HepG2 (cell line): ENCODE measurements at regions of chr17 and their contacts with region 1.

Region 1: GRCh38 chr17:39699818-39700147 is at the start of gene ERBB2:
- DNase-seq: peak; percentile 64
- ATAC-seq: peak; percentile 20
- H3K4me3 ChIP-seq: peak within 1 kb of the TSS; percentile 90 to 94 (median 90)
- H3K27ac ChIP-seq: peak within 1 kb of the TSS; percentile 78
- H3K4me1 ChIP-seq: peaks cover 78% of the 10 kb centered on the region
- H3K27me3 ChIP-seq: no peaks in the 10 kb centered on the region
- CTCF ChIP-seq: 0 out of 2 replicates have a peak, but pooled peaks have one; percentile 14
- EP300 ChIP-seq: no peak
- POLR2A ChIP-seq: peak; percentile 53 to 73
- RAD21 ChIP-seq: no peak
- total RNA-seq, gene ERBB2: 30.2 and 64.1 TPM in 2 replicates

Region 2: GRCh38 chr17:39513309-39513708 is 186.5 kb before region 1 on chr17:
- CTCF ChIA-PET with region 1: no interaction called
- POLR2A ChIA-PET with region 1: no interaction called
- in situ Hi-C with region 1: no loop called
- intact Hi-C with region 1: no loop called
- DNase-seq: no peak
- ATAC-seq: no peak
- H3K4me3 ChIP-seq: no peak overlapping the region
- H3K27ac ChIP-seq: no peak overlapping the region
- H3K4me1 ChIP-seq: no peaks in the 10 kb centered on the region
- H3K27me3 ChIP-seq: no peaks in the 10 kb centered on the region
- CTCF ChIP-seq: no peak
- EP300 ChIP-seq: no peak
- POLR2A ChIP-seq: no peak
- RAD21 ChIP-seq: no peak

Region 3: DNA sequence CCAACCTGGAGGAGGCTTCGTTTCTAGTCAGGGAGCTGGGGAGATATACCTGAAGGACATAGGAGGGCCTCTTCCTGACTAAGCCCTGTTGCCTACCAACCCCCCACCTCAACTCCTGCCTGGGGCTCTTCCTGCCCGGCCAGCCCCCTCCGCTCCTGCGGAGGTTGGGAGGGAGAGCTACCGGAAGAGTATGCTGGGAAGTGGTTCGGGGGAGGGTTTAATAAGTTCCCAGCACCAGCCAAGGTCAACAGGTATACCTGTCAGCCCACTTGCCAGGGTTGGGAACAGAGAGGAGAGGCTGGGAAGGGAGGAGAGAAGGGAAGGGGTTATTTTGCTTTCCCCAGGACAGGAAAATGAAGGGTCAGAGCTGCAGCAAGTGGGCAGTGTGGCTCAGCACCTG is 68.4 kb before region 1 on chr17:
- CTCF ChIA-PET with region 1: no interaction called
- POLR2A ChIA-PET with region 1: interaction called, 11 read pairs
- in situ Hi-C with region 1: no loop called
- intact Hi-C with region 1: no loop called
- DNase-seq: no peak
- ATAC-seq: no peak
- H3K4me3 ChIP-seq: peak overlapping the region in 1 of 3 experiments; percentile 45; a peak in 2 of 6 replicates
- H3K27ac ChIP-seq: no peak overlapping the region
- H3K4me1 ChIP-seq: peaks cover 95% of the 10 kb centered on the region
- H3K27me3 ChIP-seq: peaks cover 20 to 63% of the 10 kb centered on the region in 2 experiments; a peak in 4 of 5 replicates
- CTCF ChIP-seq: no peak
- EP300 ChIP-seq: no peak
- POLR2A ChIP-seq: no peak
- RAD21 ChIP-seq: no peak

Region 4: GRCh38 chr17:39668199-39668966 is 31.4 kb before region 1 on chr17 and contains the start of gene PNMT:
- CTCF ChIA-PET with region 1: no interaction called
- POLR2A ChIA-PET with region 1: interaction called, 96 read pairs
- in situ Hi-C with region 1: no loop called
- intact Hi-C with region 1: no loop called
- DNase-seq: peak; percentile 56
- ATAC-seq: peak; percentile 39
- H3K4me3 ChIP-seq: peak within 1 kb of the TSS; percentile 24 to 66 (median 46); a peak in 5 of 6 replicates
- H3K27ac ChIP-seq: no peak within 1 kb of the TSS
- H3K4me1 ChIP-seq: peaks cover 77% of the 10 kb centered on the region
- H3K27me3 ChIP-seq: peaks cover 11 to 51% of the 10 kb centered on the region in 2 experiments
- CTCF ChIP-seq: peak; percentile 94
- EP300 ChIP-seq: no peak
- POLR2A ChIP-seq: no peak
- RAD21 ChIP-seq: peak; percentile 85
- total RNA-seq, gene PNMT: not detected in 2 replicates

Region 5: GRCh38 chr17:39687811-39688518 is 11.8 kb before region 1 on chr17 and contains the start of gene PGAP3:
- CTCF ChIA-PET with region 1: no interaction called
- POLR2A ChIA-PET with region 1: interaction called, 118 read pairs
- in situ Hi-C with region 1: no loop called
- intact Hi-C with region 1: loop called (anchors 1 kb)
- DNase-seq: peak; percentile 95
- ATAC-seq: peak; percentile 95
- H3K4me3 ChIP-seq: peak within 1 kb of the TSS; percentile 72 to 76 (median 74)
- H3K27ac ChIP-seq: peak within 1 kb of the TSS; percentile 88
- H3K4me1 ChIP-seq: peaks cover 31% of the 10 kb centered on the region
- H3K27me3 ChIP-seq: no peaks in the 10 kb centered on the region; a peak in 1 of 5 replicates
- CTCF ChIP-seq: peak; percentile 65
- EP300 ChIP-seq: peak in 1 of 2 experiments; percentile 46; a peak in 2 of 4 replicates
- POLR2A ChIP-seq: peak; percentile 78 to 86
- RAD21 ChIP-seq: peak; percentile 54; the same call in 1 of the 2 replicates
- total RNA-seq, gene PGAP3: 5.1 and 11.9 TPM in 2 replicates

Region 6: GRCh38 chr17:39730095-39730921 is 30.5 kb after region 1 on chr17 and contains the start of gene MIEN1:
- CTCF ChIA-PET with region 1: no interaction called
- POLR2A ChIA-PET with region 1: interaction called, 69 read pairs
- in situ Hi-C with region 1: no loop called
- intact Hi-C with region 1: loop called (anchors 2 kb)
- DNase-seq: peak; percentile 78
- ATAC-seq: peak; percentile 89
- H3K4me3 ChIP-seq: peak within 1 kb of the TSS; percentile 68 to 81 (median 74)
- H3K27ac ChIP-seq: peak within 1 kb of the TSS; percentile 65
- H3K4me1 ChIP-seq: peaks cover 21% of the 10 kb centered on the region
- H3K27me3 ChIP-seq: no peaks in the 10 kb centered on the region
- CTCF ChIP-seq: peak; percentile 93
- EP300 ChIP-seq: 0 out of 4 replicates have a peak, but pooled peaks have one; percentile 3 to 49
- POLR2A ChIP-seq: peak; percentile 56 to 84
- RAD21 ChIP-seq: peak; percentile 97
- total RNA-seq, gene MIEN1: 40.6 and 48.6 TPM in 2 replicates

Region 7: GRCh38 chr17:39754161-39754951 is 54.6 kb after region 1 on chr17:
- CTCF ChIA-PET with region 1: interaction called, 4 read pairs
- POLR2A ChIA-PET with region 1: interaction called, 22 read pairs
- in situ Hi-C with region 1: no loop called
- intact Hi-C with region 1: no loop called
- DNase-seq: peak; percentile 87
- ATAC-seq: peak; percentile 81
- H3K4me3 ChIP-seq: peak overlapping the region; percentile 63 to 80 (median 73)
- H3K27ac ChIP-seq: peak overlapping the region; percentile 29
- H3K4me1 ChIP-seq: peaks cover 80% of the 10 kb centered on the region
- H3K27me3 ChIP-seq: peaks cover 6 to 43% of the 10 kb centered on the region in 2 experiments
- CTCF ChIP-seq: peak; percentile 95
- EP300 ChIP-seq: peak in 1 of 2 experiments; percentile 5; a peak in 1 of 4 replicates
- POLR2A ChIP-seq: peak in 1 of 2 experiments; percentile 67
- RAD21 ChIP-seq: peak; percentile 100